ENCODE measurements at regions of chr11 and their contacts with region 1.

Region 1: GRCh38 chr11:127017482-127017881 is 16.9 kb upstream of the KIRREL3 start:
- DNase-seq: no peak
- H3K4me3 ChIP-seq: no peak overlapping the region
- H3K27ac ChIP-seq: no peak overlapping the region
- H3K4me1 ChIP-seq: no peaks in the 10 kb centered on the region
- H3K27me3 ChIP-seq: no peaks in the 10 kb centered on the region
- CTCF ChIP-seq: peak; percentile 57 to 70 (median 61)
- EP300 ChIP-seq: no peak
- POLR2A ChIP-seq: no peak
- RAD21 ChIP-seq: peak; percentile 53 to 63

Region 2: GRCh38 chr11:127027789-127028188 is 10.3 kb after region 1 on chr11:
- CTCF ChIA-PET with region 1: interaction called, 15 read pairs
- POLR2A ChIA-PET with region 1: no interaction called
- DNase-seq: no peak
- H3K4me3 ChIP-seq: no peak overlapping the region
- H3K27ac ChIP-seq: no peak overlapping the region
- H3K4me1 ChIP-seq: no peaks in the 10 kb centered on the region; a peak in 1 of 7 replicates
- H3K27me3 ChIP-seq: peaks cover 0 to 1% (median 0%) of the 10 kb centered on the region in 4 experiments; a peak in 1 of 7 replicates
- CTCF ChIP-seq: no peak
- EP300 ChIP-seq: no peak
- POLR2A ChIP-seq: no peak
- RAD21 ChIP-seq: no peak

Measured in H1 (cell line).